BJ (cell line): ENCODE measurements at regions of chr19 and their contacts with region 1.

Region 1: DNA sequence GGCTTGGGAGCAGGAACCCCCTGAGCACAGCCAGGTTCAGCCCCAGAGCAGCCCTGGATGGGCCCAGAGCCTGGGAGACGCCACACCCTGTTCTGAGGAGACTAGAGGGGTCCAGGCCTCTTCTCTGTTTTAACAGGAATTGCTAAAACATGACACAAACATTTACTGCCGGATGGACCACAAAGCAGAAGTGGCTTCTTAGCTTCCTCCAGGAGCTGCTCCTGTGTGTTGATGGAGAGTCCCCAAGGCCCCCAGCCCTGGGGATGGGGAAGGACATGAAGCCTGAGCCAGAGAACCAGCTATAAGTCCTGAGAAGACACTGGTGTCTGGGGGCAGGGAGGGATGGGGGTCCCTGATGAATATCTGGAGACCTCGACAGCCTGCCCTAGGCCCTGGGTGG is 14.6 kb downstream of the CEACAM3 start:
- DNase-seq: no peak
- H3K4me3 ChIP-seq: no peak overlapping the region
- H3K27me3 ChIP-seq: no peaks in the 10 kb centered on the region
- CTCF ChIP-seq: no peak

Region 2: GRCh38 chr19:41795031-41795461 is 16.0 kb before region 1 on chr19:
- CTCF ChIA-PET with region 1: interaction called, 10 read pairs
- POLR2A ChIA-PET with region 1: no interaction called
- DNase-seq: no peak
- H3K4me3 ChIP-seq: no peak overlapping the region
- H3K27me3 ChIP-seq: peaks cover 4% of the 10 kb centered on the region
- CTCF ChIP-seq: peak; percentile 83